ENCODE measurements at regions of chr7 and their contacts with region 1.

Region 1: DNA sequence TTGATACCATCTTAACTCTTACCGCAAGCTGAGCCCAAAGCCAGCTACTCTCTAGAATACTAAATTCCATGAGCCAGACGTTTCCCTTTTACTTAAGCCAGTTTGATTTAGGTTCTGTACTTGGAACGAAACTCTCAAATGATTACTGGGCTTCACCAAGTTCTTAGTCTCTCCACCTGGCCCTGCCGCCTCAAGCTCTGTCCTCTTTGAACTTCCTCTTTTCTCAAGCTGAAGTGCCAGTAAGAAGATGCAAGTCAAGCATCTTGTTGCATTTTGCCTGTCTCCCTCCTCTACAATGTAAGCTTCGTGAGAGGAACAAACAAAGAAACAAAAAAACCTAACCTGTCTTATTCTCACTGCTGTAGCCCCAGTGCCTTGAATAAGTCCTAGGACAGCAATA is 358.2 kb upstream of the NPVF start:
- DNase-seq: no peak
- ATAC-seq: no peak
- H3K4me3 ChIP-seq: no peak overlapping the region
- H3K27ac ChIP-seq: no peak overlapping the region
- H3K4me1 ChIP-seq: no peaks in the 10 kb centered on the region
- H3K27me3 ChIP-seq: no peaks in the 10 kb centered on the region; a peak in 1 of 4 replicates
- CTCF ChIP-seq: no peak
- EP300 ChIP-seq: no peak
- POLR2A ChIP-seq: no peak
- RAD21 ChIP-seq: no peak

Region 2: GRCh38 chr7:25503306-25503705 is 83.2 kb before region 1 on chr7:
- CTCF ChIA-PET with region 1: no interaction called
- POLR2A ChIA-PET with region 1: no interaction called
- RAD21 ChIA-PET with region 1: no interaction called
- SMC1A ChIA-PET with region 1: no interaction called
- in situ Hi-C with region 1: no loop called
- intact Hi-C with region 1: no loop called
- DNase-seq: no peak
- ATAC-seq: no peak
- H3K4me3 ChIP-seq: no peak overlapping the region
- H3K27ac ChIP-seq: no peak overlapping the region
- H3K4me1 ChIP-seq: no peaks in the 10 kb centered on the region
- H3K27me3 ChIP-seq: no peaks in the 10 kb centered on the region
- CTCF ChIP-seq: no peak
- EP300 ChIP-seq: no peak
- POLR2A ChIP-seq: no peak
- RAD21 ChIP-seq: no peak

Region 3: DNA sequence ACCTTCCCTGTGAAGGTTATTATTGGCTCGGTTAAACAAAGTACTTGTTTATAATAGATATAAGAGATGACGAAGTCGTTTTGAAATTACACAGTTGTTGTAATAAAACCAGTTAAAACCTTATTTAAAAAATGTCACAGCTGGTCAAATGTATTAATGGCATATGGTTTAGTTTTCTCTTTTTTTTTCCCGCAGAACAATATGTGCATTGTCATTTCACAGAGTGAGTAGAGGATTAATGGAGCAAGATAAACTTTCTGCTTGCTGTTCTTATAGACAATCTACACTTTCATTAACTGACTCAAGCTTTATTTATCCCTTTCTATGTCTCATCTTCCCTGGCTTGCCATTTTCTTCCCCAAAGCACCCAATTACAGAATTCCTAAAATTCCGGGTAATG is 46.1 kb after region 1 on chr7:
- CTCF ChIA-PET with region 1: no interaction called
- POLR2A ChIA-PET with region 1: no interaction called
- RAD21 ChIA-PET with region 1: no interaction called
- SMC1A ChIA-PET with region 1: no interaction called
- in situ Hi-C with region 1: loop called (anchors 5 kb)
- intact Hi-C with region 1: no loop called
- DNase-seq: no peak
- ATAC-seq: no peak
- H3K4me3 ChIP-seq: no peak overlapping the region
- H3K27ac ChIP-seq: no peak overlapping the region
- H3K4me1 ChIP-seq: no peaks in the 10 kb centered on the region
- H3K27me3 ChIP-seq: no peaks in the 10 kb centered on the region; a peak in 2 of 4 replicates
- CTCF ChIP-seq: no peak
- EP300 ChIP-seq: no peak
- POLR2A ChIP-seq: no peak
- RAD21 ChIP-seq: no peak

Region 4: DNA sequence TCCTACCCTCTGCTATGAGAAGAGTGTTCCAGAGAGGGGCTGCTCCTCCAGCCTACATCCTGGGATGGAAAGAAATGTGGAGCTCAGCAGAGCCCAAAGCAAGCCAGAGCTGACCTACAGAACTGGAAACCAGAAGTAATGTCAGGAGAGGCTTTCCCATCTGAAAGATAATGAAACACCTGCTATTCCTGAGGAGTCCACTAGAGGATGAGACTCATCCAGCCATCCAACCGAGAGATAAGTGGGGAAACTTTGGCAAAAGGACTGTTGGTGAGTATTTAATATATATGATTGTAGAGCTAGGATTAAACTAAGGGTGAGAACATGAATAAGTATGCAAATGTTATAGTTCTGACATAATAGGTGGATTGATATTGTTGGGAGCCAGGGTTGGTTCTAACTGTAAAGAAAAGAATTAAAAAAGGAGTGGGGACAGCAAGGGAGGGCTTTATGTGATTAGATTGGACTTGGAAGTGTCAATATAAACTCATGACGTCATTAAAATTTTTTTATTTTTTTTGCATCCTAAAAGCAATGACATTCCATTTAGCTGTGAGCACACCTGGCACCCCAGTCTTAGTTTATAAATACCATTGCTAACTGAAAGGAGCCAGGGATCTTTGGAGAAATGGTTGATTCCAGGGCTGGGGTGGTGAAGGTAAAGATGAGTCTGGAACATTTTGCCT is 252.7 kb after region 1 on chr7:
- CTCF ChIA-PET with region 1: no interaction called
- POLR2A ChIA-PET with region 1: no interaction called
- RAD21 ChIA-PET with region 1: no interaction called
- SMC1A ChIA-PET with region 1: no interaction called
- in situ Hi-C with region 1: no loop called
- intact Hi-C with region 1: no loop called
- DNase-seq: no peak
- ATAC-seq: no peak
- H3K4me3 ChIP-seq: no peak overlapping the region
- H3K27ac ChIP-seq: no peak overlapping the region
- H3K4me1 ChIP-seq: no peaks in the 10 kb centered on the region
- H3K27me3 ChIP-seq: no peaks in the 10 kb centered on the region; a peak in 2 of 4 replicates
- CTCF ChIP-seq: peak in 2 of 3 experiments; percentile 32 to 36; a peak in 4 of 6 replicates
- EP300 ChIP-seq: no peak
- POLR2A ChIP-seq: no peak
- RAD21 ChIP-seq: no peak

Measured in GM12878 (cell line).